ENCODE measurements at regions of chr11 and their contacts with region 1.

Region 1: DNA sequence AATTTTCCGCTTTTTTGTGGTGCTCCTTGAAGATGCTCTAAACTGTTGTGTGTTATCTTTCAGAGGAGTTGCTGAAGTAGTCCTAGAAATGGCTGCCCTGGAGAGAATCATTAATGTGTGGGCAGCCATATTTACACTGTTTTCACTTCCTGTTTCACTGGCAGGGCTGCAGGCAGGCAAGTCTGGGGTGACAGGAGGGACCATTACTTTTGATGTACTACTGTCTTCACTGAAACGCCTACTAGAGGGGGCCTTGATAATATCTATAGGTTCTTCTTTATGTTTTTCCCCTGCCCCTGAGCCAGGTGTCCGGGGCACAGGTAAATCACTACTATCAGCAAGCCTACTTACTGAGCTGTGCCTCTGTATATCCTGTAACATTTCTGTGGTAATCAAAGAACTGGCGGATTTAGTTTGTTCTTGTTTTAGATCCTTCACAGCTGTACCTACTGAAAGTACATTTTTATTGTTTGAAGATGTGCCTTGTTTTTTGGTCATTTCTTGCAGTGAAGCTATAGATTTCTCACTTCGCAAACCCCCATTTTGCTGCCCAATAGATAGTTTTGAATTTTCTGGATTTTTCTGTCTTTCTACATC is 39.7 kb downstream of the ACAT1 start:
- DNase-seq: no peak
- H3K4me3 Mint-ChIP-seq: no peak overlapping the region
- H3K27ac Mint-ChIP-seq: peak overlapping the region; percentile 10
- H3K4me1 Mint-ChIP-seq: peaks cover 13% of the 10 kb centered on the region
- H3K27me3 Mint-ChIP-seq: no peaks in the 10 kb centered on the region

Region 2: DNA sequence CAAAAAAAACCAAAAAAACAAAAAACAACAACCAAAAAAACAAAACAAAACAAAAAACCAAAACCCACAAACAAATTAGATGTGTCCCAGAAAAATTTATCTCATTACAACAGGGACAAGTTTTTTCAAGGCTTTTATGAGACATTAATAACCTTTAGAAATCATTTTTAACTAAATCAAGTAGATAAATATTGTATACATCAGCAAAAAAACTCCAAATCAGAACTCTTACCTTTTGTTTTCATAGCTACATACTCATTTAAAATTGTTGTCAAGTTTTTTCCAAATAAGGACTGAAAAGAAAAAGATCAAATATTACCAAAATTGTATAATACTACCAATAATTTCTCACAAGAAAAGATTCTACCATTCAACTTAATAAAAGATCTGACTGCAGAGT is 32.7 kb after region 1 on chr11:
- intact Hi-C with region 1: loop called (anchors 5 kb)
- DNase-seq: no peak
- H3K4me3 Mint-ChIP-seq: no peak overlapping the region
- H3K27ac Mint-ChIP-seq: no peak overlapping the region
- H3K4me1 Mint-ChIP-seq: peaks cover 26% of the 10 kb centered on the region
- H3K27me3 Mint-ChIP-seq: no peaks in the 10 kb centered on the region

Measured in activated T-helper 1 cell treated with anti-CD3 and anti-CD28 coated beads, Interleukin-12 subunit alpha, Interleukin-12 subunit beta, Interleukin-2, Interleukin-4 antibody, amounts not matched to agents 30 ng/mL and 10 ng/mL and 1 ng/mL, durations not matched to agents 14 hours and 24 hours and 36 hours (primary cell).